ENCODE measurements at regions of chr7 and their contacts with region 1.

Region 1: GRCh38 chr7:119270045-119270464 is 1002.9 kb upstream of the KCND2 start:
- DNase-seq: peak; percentile 82
- ATAC-seq: peak; percentile 68
- H3K4me3 ChIP-seq: no peak overlapping the region
- H3K27ac ChIP-seq: peak overlapping the region; percentile 53
- H3K4me1 ChIP-seq: peaks cover 15% of the 10 kb centered on the region
- H3K27me3 ChIP-seq: no peaks in the 10 kb centered on the region
- CTCF ChIP-seq: peak; percentile 89

Region 2: GRCh38 chr7:119065966-119066365 is 204.1 kb before region 1 on chr7:
- CTCF ChIA-PET with region 1: no interaction called
- POLR2A ChIA-PET with region 1: no interaction called
- intact Hi-C with region 1: no loop called
- DNase-seq: no peak
- ATAC-seq: no peak
- H3K4me3 ChIP-seq: no peak overlapping the region
- H3K27ac ChIP-seq: no peak overlapping the region
- H3K4me1 ChIP-seq: no peaks in the 10 kb centered on the region
- H3K27me3 ChIP-seq: no peaks in the 10 kb centered on the region
- CTCF ChIP-seq: no peak

Region 3: DNA sequence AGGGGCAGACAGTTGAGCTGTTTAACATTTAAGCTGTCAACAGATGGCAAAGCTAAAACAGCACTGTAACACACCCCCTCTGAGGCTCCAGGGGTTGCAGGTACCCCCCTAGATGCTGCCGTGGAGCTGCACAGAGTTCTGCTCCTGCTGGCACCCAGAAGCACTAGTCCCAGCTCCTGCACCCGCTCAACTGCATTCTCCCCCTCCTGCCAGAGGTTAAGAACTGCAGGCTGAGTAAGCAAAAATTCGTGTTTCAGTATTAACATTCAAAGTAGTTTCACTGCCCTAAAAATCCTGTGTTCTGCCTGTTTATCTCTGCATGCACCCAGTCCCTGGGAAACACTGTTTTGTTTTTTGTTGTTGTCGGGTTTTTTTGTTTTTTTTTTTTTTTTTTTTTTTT is 212.2 kb after region 1 on chr7:
- CTCF ChIA-PET with region 1: no interaction called
- POLR2A ChIA-PET with region 1: no interaction called
- intact Hi-C with region 1: loop called (anchors 5 kb)
- DNase-seq: peak; percentile 50
- ATAC-seq: peak; percentile 88
- H3K4me3 ChIP-seq: no peak overlapping the region
- H3K27ac ChIP-seq: no peak overlapping the region
- H3K4me1 ChIP-seq: no peaks in the 10 kb centered on the region
- H3K27me3 ChIP-seq: no peaks in the 10 kb centered on the region
- CTCF ChIP-seq: peak; percentile 52

Region 4: GRCh38 chr7:119555788-119556187 is 285.7 kb after region 1 on chr7:
- CTCF ChIA-PET with region 1: no interaction called
- POLR2A ChIA-PET with region 1: no interaction called
- intact Hi-C with region 1: loop called (anchors 2 kb)
- DNase-seq: no peak
- ATAC-seq: peak; percentile 62
- H3K4me3 ChIP-seq: no peak overlapping the region
- H3K27ac ChIP-seq: no peak overlapping the region
- H3K4me1 ChIP-seq: peaks cover 9% of the 10 kb centered on the region; the same call in 1 of the 2 replicates
- H3K27me3 ChIP-seq: no peaks in the 10 kb centered on the region
- CTCF ChIP-seq: no peak

Region 5: DNA sequence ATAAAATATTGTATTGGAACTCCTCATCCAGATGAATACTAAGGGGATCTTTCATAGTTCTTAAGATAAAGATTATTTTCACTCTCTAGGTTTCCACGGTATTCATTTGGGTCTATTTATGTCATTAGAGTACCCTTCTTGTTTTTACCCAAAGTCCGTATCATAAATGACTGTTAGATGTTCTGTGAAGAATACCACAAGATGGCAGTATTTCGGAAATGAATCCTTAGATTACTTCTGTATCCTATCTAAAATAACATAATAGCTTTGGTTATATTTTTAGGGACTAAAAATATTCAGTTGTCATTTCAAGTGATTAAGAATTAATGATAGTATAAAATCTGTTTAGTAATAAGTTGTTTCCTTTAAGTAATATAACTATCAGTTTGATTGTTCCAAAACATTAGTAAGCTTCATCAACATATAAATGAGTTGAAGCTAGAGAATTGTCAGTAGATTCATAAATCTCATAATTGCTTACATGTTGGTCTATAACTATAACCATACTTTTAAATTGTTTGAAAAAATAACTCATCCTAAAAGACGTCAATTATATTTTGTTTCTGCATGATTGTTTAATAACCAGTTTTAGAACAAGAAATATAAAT is 665.5 kb after region 1 on chr7:
- CTCF ChIA-PET with region 1: no interaction called
- POLR2A ChIA-PET with region 1: no interaction called
- intact Hi-C with region 1: loop called (anchors 2 kb)
- DNase-seq: peak; percentile 60
- ATAC-seq: peak; percentile 80
- H3K4me3 ChIP-seq: no peak overlapping the region
- H3K27ac ChIP-seq: no peak overlapping the region
- H3K4me1 ChIP-seq: no peaks in the 10 kb centered on the region
- H3K27me3 ChIP-seq: no peaks in the 10 kb centered on the region
- CTCF ChIP-seq: peak; percentile 72

Region 6: GRCh38 chr7:120272261-120272660 is 1002.2 kb after region 1 on chr7:
- CTCF ChIA-PET with region 1: no interaction called
- POLR2A ChIA-PET with region 1: no interaction called
- intact Hi-C with region 1: loop called (anchors 1 kb)
- DNase-seq: peak; percentile 66
- ATAC-seq: peak; percentile 67
- H3K4me3 ChIP-seq: peak overlapping the region; percentile 72
- H3K27ac ChIP-seq: no peak overlapping the region
- H3K4me1 ChIP-seq: no peaks in the 10 kb centered on the region
- H3K27me3 ChIP-seq: peaks cover 7% of the 10 kb centered on the region
- CTCF ChIP-seq: peak; percentile 86